CD8-positive, alpha-beta T cell (primary cell): ENCODE measurements at regions of chr12 and their contacts with region 1.

Region 1: DNA sequence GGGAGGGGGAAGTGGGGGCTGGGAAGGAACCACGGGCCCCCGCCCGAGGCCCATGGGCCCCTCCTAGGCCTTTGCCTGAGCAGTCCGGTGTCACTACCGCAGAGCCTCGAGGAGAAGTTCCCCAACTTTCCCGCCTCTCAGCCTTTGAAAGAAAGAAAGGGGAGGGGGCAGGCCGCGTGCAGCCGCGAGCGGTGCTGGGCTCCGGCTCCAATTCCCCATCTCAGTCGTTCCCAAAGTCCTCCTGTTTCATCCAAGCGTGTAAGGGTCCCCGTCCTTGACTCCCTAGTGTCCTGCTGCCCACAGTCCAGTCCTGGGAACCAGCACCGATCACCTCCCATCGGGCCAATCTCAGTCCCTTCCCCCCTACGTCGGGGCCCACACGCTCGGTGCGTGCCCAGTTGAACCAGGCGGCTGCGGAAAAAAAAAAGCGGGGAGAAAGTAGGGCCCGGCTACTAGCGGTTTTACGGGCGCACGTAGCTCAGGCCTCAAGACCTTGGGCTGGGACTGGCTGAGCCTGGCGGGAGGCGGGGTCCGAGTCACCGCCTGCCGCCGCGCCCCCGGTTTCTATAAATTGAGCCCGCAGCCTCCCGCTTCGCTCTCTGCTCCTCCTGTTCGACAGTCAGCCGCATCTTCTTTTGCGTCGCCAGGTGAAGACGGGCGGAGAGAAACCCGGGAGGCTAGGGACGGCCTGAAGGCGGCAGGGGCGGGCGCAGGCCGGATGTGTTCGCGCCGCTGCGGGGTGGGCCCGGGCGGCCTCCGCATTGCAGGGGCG is at the start of gene GAPDH:
- DNase-seq: peak; percentile 66 to 92 (median 84)
- ATAC-seq: no peak
- H3K4me3 ChIP-seq: peak within 1 kb of the TSS; percentile 85 to 94
- H3K4me3 Mint-ChIP-seq: peak within 1 kb of the TSS; percentile 87
- H3K27ac ChIP-seq: peak within 1 kb of the TSS; percentile 85 to 88
- H3K27ac Mint-ChIP-seq: peak within 1 kb of the TSS; percentile 96
- H3K4me1 ChIP-seq: peaks cover 47% of the 10 kb centered on the region
- H3K4me1 Mint-ChIP-seq: peaks cover 49% of the 10 kb centered on the region
- H3K27me3 ChIP-seq: no peaks in the 10 kb centered on the region
- H3K27me3 Mint-ChIP-seq: no peaks in the 10 kb centered on the region
- CTCF ChIP-seq: no peak
- total RNA-seq, gene GAPDH: 503 to 513 TPM

Region 2: DNA sequence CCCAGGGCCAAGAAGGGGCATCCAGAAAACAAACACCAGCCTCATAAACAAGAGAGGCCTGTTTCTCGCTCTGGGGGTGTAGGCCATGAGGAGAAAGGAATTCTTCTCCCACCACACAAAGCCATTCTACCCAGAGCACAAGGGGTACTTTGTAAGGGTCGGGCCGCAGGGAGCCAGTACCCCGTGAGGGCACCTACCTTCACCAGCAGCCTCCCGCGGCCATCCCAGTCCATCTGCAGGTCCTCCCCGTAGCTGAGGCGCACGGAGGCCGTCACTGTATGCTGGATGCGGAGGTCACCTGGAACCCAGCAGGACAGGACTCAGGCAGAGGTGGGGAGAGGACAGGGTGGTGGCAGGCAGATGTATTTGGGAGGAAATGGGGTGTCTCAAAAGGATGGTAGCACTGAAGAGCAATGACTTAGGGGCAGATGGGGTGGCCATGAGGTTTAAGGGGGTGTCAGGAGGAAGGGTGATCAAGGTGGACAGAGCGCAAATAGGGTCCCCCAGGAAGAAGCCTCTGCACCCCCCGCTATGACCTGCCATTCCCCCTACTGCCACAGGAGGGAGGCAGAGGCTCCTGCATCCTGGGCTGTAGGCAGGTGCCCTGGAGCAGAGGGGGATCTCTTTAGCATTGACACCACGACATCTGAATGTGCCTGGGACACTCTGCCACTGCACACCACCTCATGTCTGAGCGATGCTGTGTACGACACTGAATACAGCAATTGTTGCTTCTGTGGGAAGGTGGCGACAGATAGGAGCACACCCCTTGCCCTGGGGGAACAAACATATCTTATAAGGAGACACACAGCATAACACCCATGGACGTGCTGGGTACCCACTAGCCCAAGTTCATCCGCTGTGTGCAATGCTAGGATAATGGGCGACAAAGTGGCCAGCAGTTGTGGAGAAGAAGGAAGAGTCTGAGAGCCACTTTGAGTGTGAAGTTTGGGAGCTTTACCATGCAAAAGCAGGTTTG is 471.1 kb before region 1 on chr12:
- CTCF ChIA-PET with region 1: no interaction called
- POLR2A ChIA-PET with region 1: no interaction called
- intact Hi-C with region 1: loop called in 1 of 2 experiments (anchors 5 kb)
- DNase-seq: peak; percentile 39 to 81 (median 64)
- ATAC-seq: peak; percentile 99
- H3K4me3 ChIP-seq: no peak overlapping the region
- H3K4me3 Mint-ChIP-seq: no peak overlapping the region
- H3K27ac ChIP-seq: no peak overlapping the region
- H3K27ac Mint-ChIP-seq: no peak overlapping the region
- H3K4me1 ChIP-seq: no peaks in the 10 kb centered on the region
- H3K4me1 Mint-ChIP-seq: peaks cover 3% of the 10 kb centered on the region
- H3K27me3 ChIP-seq: no peaks in the 10 kb centered on the region
- H3K27me3 Mint-ChIP-seq: peaks cover 3% of the 10 kb centered on the region
- CTCF ChIP-seq: peak; percentile 84

Region 3: DNA sequence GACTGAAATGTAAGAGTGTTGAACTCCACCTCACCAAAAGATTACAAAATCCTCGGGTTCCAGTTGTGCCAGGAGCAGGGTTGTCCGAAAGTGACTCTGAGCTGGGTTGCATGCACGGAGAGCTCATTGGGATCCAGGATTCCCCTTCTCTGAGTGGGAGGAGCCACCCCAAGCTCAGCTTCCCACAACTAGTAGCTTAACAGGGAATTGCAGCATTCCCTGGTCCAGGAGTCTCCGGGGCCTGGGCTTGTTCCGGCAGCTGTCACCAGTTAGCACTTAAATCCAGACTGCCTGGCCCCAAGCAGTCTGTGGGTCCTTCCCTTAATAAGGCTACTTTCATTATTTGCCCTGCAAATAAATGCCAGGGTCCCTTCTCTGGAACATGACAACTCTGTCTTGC is 283.8 kb before region 1 on chr12:
- CTCF ChIA-PET with region 1: no interaction called
- POLR2A ChIA-PET with region 1: no interaction called
- intact Hi-C with region 1: no loop called
- DNase-seq: no peak
- ATAC-seq: no peak
- H3K4me3 ChIP-seq: no peak overlapping the region
- H3K4me3 Mint-ChIP-seq: no peak overlapping the region
- H3K27ac ChIP-seq: no peak overlapping the region
- H3K27ac Mint-ChIP-seq: no peak overlapping the region
- H3K4me1 ChIP-seq: no peaks in the 10 kb centered on the region
- H3K4me1 Mint-ChIP-seq: no peaks in the 10 kb centered on the region
- H3K27me3 ChIP-seq: no peaks in the 10 kb centered on the region
- H3K27me3 Mint-ChIP-seq: peaks cover 12% of the 10 kb centered on the region
- CTCF ChIP-seq: no peak

Region 4: GRCh38 chr12:6392504-6393077 is 141.5 kb before region 1 on chr12:
- CTCF ChIA-PET with region 1: no interaction called
- POLR2A ChIA-PET with region 1: no interaction called
- intact Hi-C with region 1: no loop called
- DNase-seq: no peak
- ATAC-seq: no peak
- H3K4me3 ChIP-seq: no peak overlapping the region
- H3K4me3 Mint-ChIP-seq: no peak overlapping the region
- H3K27ac ChIP-seq: no peak overlapping the region
- H3K27ac Mint-ChIP-seq: no peak overlapping the region
- H3K4me1 ChIP-seq: no peaks in the 10 kb centered on the region
- H3K4me1 Mint-ChIP-seq: no peaks in the 10 kb centered on the region
- H3K27me3 ChIP-seq: no peaks in the 10 kb centered on the region
- H3K27me3 Mint-ChIP-seq: no peaks in the 10 kb centered on the region
- CTCF ChIP-seq: no peak

Region 5: DNA sequence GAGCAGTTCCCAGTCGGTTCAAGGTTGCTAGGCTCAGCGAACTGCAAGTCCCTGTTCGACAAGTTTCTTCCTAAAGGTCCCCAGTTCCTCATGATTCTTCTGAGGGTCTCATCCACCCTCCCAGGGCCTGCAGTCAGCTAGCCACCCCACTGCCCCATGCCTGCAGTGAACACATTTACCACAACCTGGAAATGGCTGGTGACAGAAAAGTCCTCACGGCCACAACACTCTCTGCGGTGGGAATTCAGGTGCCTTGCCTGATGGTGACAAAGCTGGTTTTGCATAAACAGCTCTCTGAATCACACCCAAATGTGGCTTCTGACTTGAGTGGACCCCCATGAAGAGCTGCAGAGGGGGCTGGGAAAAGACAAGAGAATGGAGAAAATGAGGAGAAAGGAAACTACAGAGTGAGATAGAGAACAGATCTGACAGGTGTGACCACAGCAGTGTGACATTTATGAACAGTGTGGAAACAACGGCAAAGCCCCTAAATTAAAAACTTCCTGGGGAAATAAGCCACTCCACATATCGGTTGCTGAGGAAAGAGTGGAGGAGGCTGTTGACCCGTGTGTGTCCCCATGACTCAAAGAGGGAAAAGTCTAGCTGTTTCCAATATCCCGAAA is 90.6 kb before region 1 on chr12:
- CTCF ChIA-PET with region 1: interaction called, 12 read pairs
- POLR2A ChIA-PET with region 1: interaction called, 8 read pairs
- intact Hi-C with region 1: no loop called
- DNase-seq: peak in 4 of 9 experiments; percentile 44 to 65 (median 48)
- ATAC-seq: peak; percentile 30
- H3K4me3 ChIP-seq: peak overlapping the region in 1 of 2 experiments; percentile 2
- H3K4me3 Mint-ChIP-seq: peak overlapping the region; percentile 99
- H3K27ac ChIP-seq: peak overlapping the region; percentile 19 to 58
- H3K27ac Mint-ChIP-seq: peak overlapping the region; percentile 93
- H3K4me1 ChIP-seq: peaks cover 38% of the 10 kb centered on the region
- H3K4me1 Mint-ChIP-seq: peaks cover 67% of the 10 kb centered on the region
- H3K27me3 ChIP-seq: no peaks in the 10 kb centered on the region
- H3K27me3 Mint-ChIP-seq: no peaks in the 10 kb centered on the region
- CTCF ChIP-seq: no peak

Region 6: GRCh38 chr12:6451348-6452244 is 82.5 kb before region 1 on chr12 and contains the start of gene TAPBPL:
- CTCF ChIA-PET with region 1: interaction called, 19 read pairs
- POLR2A ChIA-PET with region 1: interaction called, 18 read pairs
- intact Hi-C with region 1: no loop called
- DNase-seq: peak; percentile 50 to 96 (median 79)
- ATAC-seq: peak; percentile 88
- H3K4me3 ChIP-seq: peak within 1 kb of the TSS; percentile 68 to 82
- H3K4me3 Mint-ChIP-seq: peak within 1 kb of the TSS; percentile 99
- H3K27ac ChIP-seq: peak within 1 kb of the TSS; percentile 85 to 95
- H3K27ac Mint-ChIP-seq: peak within 1 kb of the TSS; percentile 99
- H3K4me1 ChIP-seq: peaks cover 63% of the 10 kb centered on the region
- H3K4me1 Mint-ChIP-seq: peaks cover 82% of the 10 kb centered on the region
- H3K27me3 ChIP-seq: no peaks in the 10 kb centered on the region
- H3K27me3 Mint-ChIP-seq: no peaks in the 10 kb centered on the region
- CTCF ChIP-seq: no peak
- total RNA-seq, gene TAPBPL: 11.8 to 12.2 TPM

Region 7: DNA sequence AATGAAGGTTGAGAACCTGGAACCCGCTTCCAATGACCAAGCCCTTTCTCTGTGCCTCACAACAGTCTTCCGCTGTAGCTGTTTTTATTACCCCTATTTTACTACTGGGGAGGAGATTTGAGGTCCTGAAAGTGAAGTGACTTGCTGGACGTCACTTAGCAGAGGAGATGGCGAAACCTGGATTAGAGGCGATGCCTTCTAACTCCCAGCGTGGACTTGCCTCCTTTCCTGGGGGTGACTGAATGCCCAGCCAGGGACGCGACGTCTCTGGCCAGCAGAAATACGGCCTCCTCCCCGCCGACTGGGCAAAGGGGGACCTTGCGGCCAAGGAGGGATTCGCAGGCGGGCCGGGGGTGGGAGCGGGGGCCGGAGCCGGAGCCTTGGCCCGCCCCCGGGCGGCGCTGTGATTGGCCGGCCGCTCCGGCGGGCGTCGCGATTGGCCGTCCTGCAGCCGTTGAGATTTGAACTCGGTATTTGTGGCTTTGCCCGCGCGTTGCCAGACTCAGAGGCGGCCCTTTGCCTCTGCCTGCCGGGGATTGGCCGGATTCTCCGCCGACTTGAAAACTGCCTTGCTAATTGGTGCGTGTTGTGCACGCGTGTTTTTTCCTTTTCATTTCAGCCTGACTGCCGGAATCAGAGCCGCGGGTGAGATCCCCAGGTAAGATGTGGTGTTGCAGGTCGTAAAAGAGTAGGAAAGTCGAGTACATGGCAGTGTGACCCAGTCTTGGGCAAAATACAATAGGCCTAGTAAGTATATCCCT is 40.4 kb before region 1 on chr12 and contains the start of gene NCAPD2:
- CTCF ChIA-PET with region 1: interaction called, 8 read pairs
- POLR2A ChIA-PET with region 1: interaction called, 10 read pairs
- intact Hi-C with region 1: loop called (anchors 1 kb)
- DNase-seq: peak; percentile 88 to 98 (median 94)
- ATAC-seq: peak; percentile 80
- H3K4me3 ChIP-seq: peak within 1 kb of the TSS; percentile 86 to 93
- H3K4me3 Mint-ChIP-seq: peak within 1 kb of the TSS; percentile 96
- H3K27ac ChIP-seq: peak within 1 kb of the TSS; percentile 72 to 93
- H3K27ac Mint-ChIP-seq: peak within 1 kb of the TSS; percentile 98
- H3K4me1 ChIP-seq: peaks cover 26% of the 10 kb centered on the region
- H3K4me1 Mint-ChIP-seq: peaks cover 41% of the 10 kb centered on the region
- H3K27me3 ChIP-seq: no peaks in the 10 kb centered on the region
- H3K27me3 Mint-ChIP-seq: no peaks in the 10 kb centered on the region
- CTCF ChIP-seq: no peak
- total RNA-seq, gene NCAPD2: 11.7 to 13.4 TPM

Region 8: DNA sequence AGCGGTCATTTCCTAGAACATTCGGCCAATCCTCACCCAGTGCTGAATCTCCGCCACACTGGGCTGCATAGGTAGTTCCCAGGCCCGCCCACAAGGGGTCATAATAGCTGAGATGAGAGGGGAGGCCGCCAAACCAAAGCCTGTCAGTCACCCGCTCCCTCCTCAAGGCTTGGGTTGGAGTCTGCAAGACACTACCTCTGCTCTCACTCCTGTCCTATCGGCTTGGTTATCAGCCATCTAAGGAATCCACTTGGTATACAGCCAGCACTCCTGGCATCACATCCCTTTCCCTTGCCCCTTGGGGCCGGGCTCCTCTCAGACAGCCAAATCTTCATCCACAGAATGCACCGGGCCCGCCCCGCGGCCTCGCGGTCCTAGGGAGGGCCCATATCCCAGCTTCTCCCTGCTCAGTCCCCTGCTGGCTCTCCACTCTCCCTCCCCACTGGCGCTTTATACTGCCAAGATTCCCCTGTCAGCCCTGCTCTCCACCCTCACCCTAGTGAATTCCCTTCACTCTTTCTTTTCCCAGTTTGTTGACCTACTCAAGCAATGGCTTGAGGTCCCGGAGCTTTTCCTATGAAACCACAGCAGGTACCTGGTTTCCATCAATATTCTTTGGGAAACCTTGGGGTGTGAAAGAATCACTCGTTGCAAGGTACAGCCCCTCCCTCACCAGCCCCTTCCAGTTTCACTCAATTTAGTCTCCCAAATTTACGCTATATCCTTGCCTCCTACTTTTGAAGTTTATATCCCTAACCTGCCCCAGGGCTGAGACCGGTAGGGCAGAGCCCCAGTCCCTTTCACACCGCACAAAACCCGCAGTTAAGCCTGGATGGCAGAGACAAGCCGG is 20.3 kb after region 1 on chr12:
- CTCF ChIA-PET with region 1: interaction called, 87 read pairs
- POLR2A ChIA-PET with region 1: interaction called, 4 read pairs
- intact Hi-C with region 1: loop called in 1 of 2 experiments (anchors 1 kb)
- DNase-seq: peak; percentile 55 to 81 (median 71)
- ATAC-seq: peak; percentile 61
- H3K4me3 ChIP-seq: peak overlapping the region; percentile 70 to 96
- H3K4me3 Mint-ChIP-seq: peak overlapping the region; percentile 87
- H3K27ac ChIP-seq: no peak overlapping the region
- H3K27ac Mint-ChIP-seq: peak overlapping the region; percentile 58
- H3K4me1 ChIP-seq: peaks cover 35% of the 10 kb centered on the region
- H3K4me1 Mint-ChIP-seq: peaks cover 49% of the 10 kb centered on the region
- H3K27me3 ChIP-seq: no peaks in the 10 kb centered on the region
- H3K27me3 Mint-ChIP-seq: no peaks in the 10 kb centered on the region
- CTCF ChIP-seq: peak; percentile 50

Region 9: GRCh38 chr12:6914246-6914946 is 380.3 kb after region 1 on chr12 and contains the start of gene ENO2:
- CTCF ChIA-PET with region 1: no interaction called
- POLR2A ChIA-PET with region 1: no interaction called
- intact Hi-C with region 1: no loop called
- DNase-seq: peak; percentile 59 to 92 (median 89)
- ATAC-seq: peak; percentile 94
- H3K4me3 ChIP-seq: peak within 1 kb of the TSS; percentile 52 to 83
- H3K4me3 Mint-ChIP-seq: peak within 1 kb of the TSS; percentile 95
- H3K27ac ChIP-seq: peak within 1 kb of the TSS; percentile 77 to 88
- H3K27ac Mint-ChIP-seq: peak within 1 kb of the TSS; percentile 95
- H3K4me1 ChIP-seq: peaks cover 18% of the 10 kb centered on the region
- H3K4me1 Mint-ChIP-seq: peaks cover 31% of the 10 kb centered on the region
- H3K27me3 ChIP-seq: no peaks in the 10 kb centered on the region
- H3K27me3 Mint-ChIP-seq: no peaks in the 10 kb centered on the region
- CTCF ChIP-seq: no peak
- total RNA-seq, gene ENO2: 95.5 to 99.6 TPM

Region 10: DNA sequence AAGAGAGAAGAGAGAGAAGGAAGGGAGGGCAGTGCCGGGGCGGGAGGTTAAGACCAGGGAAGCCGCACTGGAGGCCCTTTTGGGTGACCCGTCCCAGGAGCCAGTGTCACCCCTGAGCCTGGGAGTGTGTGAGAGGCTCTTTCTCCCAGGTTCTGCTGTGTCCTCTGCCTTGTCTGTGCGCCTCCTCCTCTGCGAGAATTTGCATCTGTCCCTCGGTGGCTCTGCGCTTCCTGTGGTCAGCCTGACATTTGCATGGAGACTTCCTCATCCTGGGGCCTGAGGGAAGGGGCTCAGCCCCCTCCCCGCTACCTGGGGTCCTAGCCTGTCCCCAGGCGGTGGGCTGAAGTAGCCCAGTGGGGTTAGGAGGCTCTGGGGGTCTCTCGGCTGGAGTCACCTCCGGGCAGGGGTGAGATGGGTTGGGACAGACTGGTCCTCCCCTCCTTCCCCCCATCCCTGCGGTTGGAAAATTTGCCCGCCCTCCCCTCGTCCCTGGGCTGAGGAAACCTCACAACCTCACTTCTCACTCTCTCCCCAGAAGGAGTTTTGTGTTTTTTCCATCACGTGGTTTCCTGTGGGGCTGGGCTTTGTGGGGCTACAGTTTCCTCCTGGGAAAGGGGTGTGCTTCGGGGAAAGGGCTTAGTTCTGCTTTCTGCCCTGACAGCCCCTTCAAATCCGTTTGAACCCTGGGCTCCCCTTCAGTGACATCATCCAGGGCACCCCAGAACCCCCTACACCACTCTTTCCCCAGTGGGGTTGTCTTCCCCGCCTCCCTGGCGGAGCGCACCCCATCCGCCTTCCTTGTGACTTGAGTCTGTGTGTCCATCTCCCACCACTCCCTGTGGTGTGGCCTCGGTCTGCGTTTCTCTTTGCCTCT is 419.6 kb after region 1 on chr12:
- CTCF ChIA-PET with region 1: no interaction called
- POLR2A ChIA-PET with region 1: no interaction called
- intact Hi-C with region 1: loop called in 1 of 2 experiments (anchors 10 kb)
- DNase-seq: peak in 8 of 9 experiments; percentile 69 to 91 (median 82)
- ATAC-seq: peak; percentile 27
- H3K4me3 ChIP-seq: peak overlapping the region; percentile 93 to 95
- H3K4me3 Mint-ChIP-seq: peak overlapping the region; percentile 99
- H3K27ac ChIP-seq: peak overlapping the region; percentile 72 to 93
- H3K27ac Mint-ChIP-seq: peak overlapping the region; percentile 100
- H3K4me1 ChIP-seq: peaks cover 70% of the 10 kb centered on the region
- H3K4me1 Mint-ChIP-seq: peaks cover 81% of the 10 kb centered on the region
- H3K27me3 ChIP-seq: no peaks in the 10 kb centered on the region
- H3K27me3 Mint-ChIP-seq: no peaks in the 10 kb centered on the region
- CTCF ChIP-seq: no peak